Activated CD8-positive, alpha-beta T cell treated with anti-CD3 and anti-CD28 coated beads for 36 hours (primary cell): ENCODE measurements at regions of chr16 and their contacts with region 1.

Region 1: DNA sequence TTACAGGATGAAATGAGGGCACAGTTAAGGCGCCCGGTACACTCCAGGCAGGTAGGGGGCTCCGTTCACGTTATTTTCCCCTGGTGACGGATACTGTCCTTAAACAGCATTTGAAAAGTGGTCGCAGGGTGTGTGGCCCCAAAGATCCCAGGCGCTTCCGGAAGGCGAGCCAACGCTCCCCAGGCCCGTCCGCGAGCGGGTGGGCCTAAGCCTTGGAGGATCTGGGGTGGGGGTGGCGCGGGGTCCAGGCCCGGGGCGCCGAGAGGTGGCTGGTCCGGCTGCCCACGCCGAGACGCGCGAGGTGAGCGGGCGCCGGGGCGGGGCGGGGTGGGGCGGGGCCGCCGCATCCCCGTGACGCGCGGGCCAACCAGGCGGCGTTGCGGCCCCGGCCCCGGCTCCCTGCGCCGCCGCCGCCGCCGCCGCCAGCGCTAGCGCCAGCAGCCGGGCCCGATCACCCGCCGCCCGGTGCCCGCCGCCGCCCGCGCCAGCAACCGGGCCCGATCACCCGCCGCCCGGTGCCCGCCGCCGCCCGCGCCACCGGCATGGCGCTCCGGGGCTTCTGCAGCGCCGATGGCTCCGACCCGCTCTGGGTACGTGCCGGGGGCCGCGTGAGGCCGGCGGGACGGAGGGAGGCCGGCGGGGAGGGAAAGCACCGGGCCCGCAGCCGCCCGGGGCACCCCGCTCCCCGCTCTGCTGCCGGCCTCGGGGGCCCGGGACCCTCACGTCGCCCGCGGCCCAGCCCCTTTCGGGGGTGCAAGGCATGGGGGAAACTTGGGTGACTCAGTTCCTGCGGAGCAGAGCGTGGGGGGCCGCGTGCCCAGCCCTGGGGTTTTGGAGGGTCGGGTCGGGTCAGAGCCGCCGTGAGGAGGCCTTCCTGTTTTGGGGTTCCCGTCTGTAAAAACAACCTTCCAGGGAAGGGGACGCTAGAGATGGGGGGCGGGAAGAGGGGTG is at the start of gene ABCC1:
- DNase-seq: peak; percentile 82
- ATAC-seq: peak; percentile 67
- H3K4me3 Mint-ChIP-seq: peak within 1 kb of the TSS; percentile 85
- H3K27ac Mint-ChIP-seq: peak within 1 kb of the TSS; percentile 99
- H3K4me1 Mint-ChIP-seq: peaks cover 47% of the 10 kb centered on the region
- H3K27me3 Mint-ChIP-seq: no peaks in the 10 kb centered on the region
- CTCF ChIP-seq: no peak
- total RNA-seq, gene ABCC1: 64.5 to 67.6 TPM

Region 2: DNA sequence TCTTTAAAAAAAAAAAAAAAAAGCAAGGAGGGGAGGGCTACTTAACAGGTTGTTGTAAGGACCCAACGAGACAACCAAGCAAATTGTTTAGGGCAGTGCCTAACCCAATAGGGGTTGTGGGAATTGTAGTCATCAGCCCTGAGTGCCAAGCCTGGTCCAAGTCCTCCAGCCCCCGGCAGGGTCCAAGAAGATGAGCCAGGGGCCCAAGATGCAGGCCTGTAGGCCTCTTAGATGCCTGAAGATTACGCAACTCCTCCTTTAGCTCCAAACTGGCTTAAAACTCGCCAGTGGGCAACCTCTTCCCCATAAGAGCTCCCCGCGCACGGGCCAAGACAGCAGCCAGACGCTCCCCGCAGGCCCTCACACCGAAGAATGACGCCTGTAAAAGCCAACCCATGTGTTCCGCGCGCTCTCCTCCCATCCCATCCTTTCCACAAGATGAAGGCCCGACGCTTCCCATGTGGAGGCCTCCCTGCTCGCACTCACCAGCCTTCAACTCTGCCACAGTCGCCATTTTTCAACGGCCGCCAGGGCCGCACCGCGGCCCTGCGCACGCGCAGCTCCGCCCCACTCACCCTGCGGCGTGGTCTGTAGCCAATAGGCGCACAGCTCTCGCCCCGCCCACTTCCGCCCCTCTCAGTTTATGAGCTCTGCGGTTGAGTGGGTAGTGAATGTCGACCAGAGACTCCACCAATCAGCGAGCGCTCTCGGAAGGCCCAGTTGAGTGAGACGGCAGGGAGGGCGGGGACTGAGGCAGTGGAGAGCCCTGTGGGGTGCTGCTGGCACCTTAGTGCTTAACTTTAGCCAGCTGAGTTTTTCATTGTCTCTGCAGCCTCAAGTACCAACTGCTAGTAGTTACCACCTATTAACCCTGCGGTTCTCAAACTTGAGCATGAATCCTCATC is 61.2 kb before region 1 on chr16 and contains the start of gene CEP20:
- CTCF ChIA-PET with region 1: no interaction called
- POLR2A ChIA-PET with region 1: interaction called, 8 read pairs
- intact Hi-C with region 1: loop called (anchors 5 kb)
- DNase-seq: peak; percentile 100
- ATAC-seq: peak; percentile 98
- H3K4me3 Mint-ChIP-seq: peak within 1 kb of the TSS; percentile 96
- H3K27ac Mint-ChIP-seq: peak within 1 kb of the TSS; percentile 100
- H3K4me1 Mint-ChIP-seq: peaks cover 34% of the 10 kb centered on the region
- H3K27me3 Mint-ChIP-seq: no peaks in the 10 kb centered on the region
- CTCF ChIP-seq: no peak
- total RNA-seq, gene CEP20: 34.5 to 39.0 TPM